ENCODE measurements at regions of chr7 and their contacts with region 1.

Region 1: DNA sequence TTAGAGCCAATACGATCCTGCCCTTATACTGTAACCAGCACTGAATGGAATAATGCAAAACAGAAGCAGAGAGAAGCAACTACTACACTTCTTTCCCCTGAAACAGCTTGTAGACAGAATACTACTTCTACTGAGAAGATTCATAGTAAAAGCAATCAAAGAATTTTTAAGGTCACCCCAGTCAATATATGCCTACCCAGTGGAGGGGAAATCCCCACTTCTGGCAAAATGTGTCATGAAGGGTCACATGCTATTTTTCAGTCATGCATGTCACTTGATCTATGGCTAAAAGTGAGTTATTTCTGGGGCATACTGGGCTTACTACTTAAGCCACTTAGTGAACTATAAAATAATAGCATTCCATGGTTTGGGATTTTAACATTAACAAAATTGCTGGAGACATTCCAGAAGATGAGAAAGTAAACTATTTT is 25.6 kb downstream of the IRF5 start:
- DNase-seq: peak; percentile 64
- H3K4me3 ChIP-seq: no peak overlapping the region
- H3K27ac ChIP-seq: peak overlapping the region; percentile 87
- H3K4me1 ChIP-seq: peaks cover 30% of the 10 kb centered on the region
- H3K27me3 ChIP-seq: no peaks in the 10 kb centered on the region
- CTCF ChIP-seq: no peak

Region 2: GRCh38 chr7:128904381-128905197 is 58.8 kb before region 1 on chr7:
- CTCF ChIA-PET with region 1: no interaction called
- dilution Hi-C with region 1: no loop called
- in situ Hi-C with region 1: no loop called
- intact Hi-C with region 1: loop called (anchors 5 kb)
- DNase-seq: peak; percentile 48
- H3K4me3 ChIP-seq: no peak overlapping the region
- H3K27ac ChIP-seq: no peak overlapping the region
- H3K4me1 ChIP-seq: peaks cover 15% of the 10 kb centered on the region
- H3K27me3 ChIP-seq: peaks cover 2% of the 10 kb centered on the region
- CTCF ChIP-seq: peak; percentile 70 to 72

Region 3: DNA sequence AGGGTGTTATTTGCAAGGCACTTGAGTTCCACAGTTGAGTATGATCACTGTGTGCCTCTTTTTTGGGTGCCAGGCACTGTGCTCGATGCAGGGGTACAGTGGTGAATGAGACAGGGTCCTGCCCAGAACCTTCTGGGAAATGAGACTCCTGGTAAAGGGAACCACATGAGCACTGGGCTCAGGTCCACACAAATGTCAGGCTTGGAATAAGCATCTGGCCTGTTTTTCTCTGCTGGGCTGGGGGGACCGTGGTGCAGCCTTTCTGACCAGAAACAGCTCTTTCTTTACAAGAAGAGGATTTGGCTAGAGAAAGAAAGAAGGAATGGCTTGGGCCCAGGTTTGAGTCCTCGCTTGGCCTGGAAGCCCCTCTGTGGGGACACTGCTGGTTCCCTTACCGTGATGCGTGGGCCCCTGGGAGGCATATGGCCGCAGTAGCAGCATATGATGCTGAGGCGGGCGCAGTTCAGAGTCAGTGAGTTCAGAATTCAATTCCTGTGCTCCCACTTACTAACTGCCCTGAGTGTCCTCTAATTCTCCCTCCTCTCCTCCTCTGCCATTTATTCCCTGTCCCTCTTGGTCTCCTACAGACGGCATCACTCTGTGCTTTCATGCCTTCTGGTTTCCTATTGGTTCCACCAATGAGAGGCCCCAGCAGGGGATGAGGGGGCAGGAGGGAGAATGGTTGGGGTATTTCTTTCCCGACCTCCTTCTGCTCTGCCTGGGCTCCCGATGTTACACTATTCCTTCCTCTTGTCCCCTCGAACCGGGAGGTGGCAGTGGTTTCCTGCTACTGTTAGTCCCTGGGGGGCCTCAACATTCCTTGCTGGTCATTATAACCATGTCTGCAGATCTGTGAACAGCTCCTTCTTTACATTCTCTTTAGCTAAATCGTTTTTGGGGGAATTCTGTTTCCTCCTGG is 43.2 kb before region 1 on chr7:
- CTCF ChIA-PET with region 1: no interaction called
- dilution Hi-C with region 1: no loop called
- in situ Hi-C with region 1: no loop called
- intact Hi-C with region 1: no loop called
- DNase-seq: no peak
- H3K4me3 ChIP-seq: no peak overlapping the region
- H3K27ac ChIP-seq: no peak overlapping the region
- H3K4me1 ChIP-seq: no peaks in the 10 kb centered on the region
- H3K27me3 ChIP-seq: peaks cover 8% of the 10 kb centered on the region
- CTCF ChIP-seq: no peak

Region 4: GRCh38 chr7:129017933-129018538 is 54.7 kb after region 1 on chr7:
- CTCF ChIA-PET with region 1: no interaction called
- dilution Hi-C with region 1: no loop called
- in situ Hi-C with region 1: no loop called
- intact Hi-C with region 1: no loop called
- DNase-seq: no peak
- H3K4me3 ChIP-seq: no peak overlapping the region
- H3K27ac ChIP-seq: no peak overlapping the region
- H3K4me1 ChIP-seq: no peaks in the 10 kb centered on the region
- H3K27me3 ChIP-seq: no peaks in the 10 kb centered on the region
- CTCF ChIP-seq: no peak

Region 5: DNA sequence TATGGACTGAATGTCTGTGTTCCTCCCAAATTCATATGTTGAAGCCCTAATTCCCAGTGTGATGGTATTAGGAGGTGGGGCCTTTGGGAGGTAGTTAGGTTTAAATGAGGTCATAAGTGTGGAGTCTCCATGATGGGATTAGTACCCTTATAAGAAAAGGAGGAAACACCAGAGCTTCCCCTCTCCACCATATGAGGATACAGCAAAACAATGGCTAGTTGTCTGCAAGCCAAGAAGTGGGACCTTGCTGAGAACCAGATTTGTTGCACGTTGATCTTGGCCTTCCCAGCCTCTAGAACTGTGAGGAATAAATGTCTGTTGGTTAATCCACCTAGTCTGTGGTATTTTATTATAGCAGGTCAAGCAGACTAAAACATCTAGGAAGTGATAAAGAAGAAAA is 363.7 kb after region 1 on chr7:
- CTCF ChIA-PET with region 1: no interaction called
- dilution Hi-C with region 1: no loop called
- in situ Hi-C with region 1: no loop called
- intact Hi-C with region 1: no loop called
- DNase-seq: no peak
- H3K4me3 ChIP-seq: no peak overlapping the region
- H3K27ac ChIP-seq: no peak overlapping the region
- H3K4me1 ChIP-seq: no peaks in the 10 kb centered on the region
- H3K27me3 ChIP-seq: no peaks in the 10 kb centered on the region
- CTCF ChIP-seq: no peak

Measured in mammary epithelial cell (primary cell).